CD4-positive, alpha-beta memory T cell (primary cell): ENCODE measurements at regions of chr2 and their contacts with region 1.

Region 1: GRCh38 chr2:74529357-74530238 is at the starts of genes AUP1 and HTRA2:
- DNase-seq: peak; percentile 83 to 88 (median 86)
- H3K4me3 ChIP-seq: peak within 1 kb of the TSS; percentile 89 to 100
- H3K4me3 Mint-ChIP-seq: peak within 1 kb of the TSS; percentile 92 to 96 (median 94)
- H3K27ac ChIP-seq: peak within 1 kb of the TSS; percentile 84
- H3K27ac Mint-ChIP-seq: peak within 1 kb of the TSS; percentile 87 to 97 (median 94)
- H3K4me1 ChIP-seq: peaks cover 31% of the 10 kb centered on the region
- H3K4me1 Mint-ChIP-seq: peaks cover 19 to 50% (median 40%) of the 10 kb centered on the region in 4 donors
- H3K27me3 ChIP-seq: no peaks in the 10 kb centered on the region
- H3K27me3 Mint-ChIP-seq: no peaks in the 10 kb centered on the region
- total RNA-seq, gene AUP1: 153 to 158 TPM
- total RNA-seq, gene HTRA2: 39.8 to 41.1 TPM

Region 2: GRCh38 chr2:74250189-74250631 is 279.4 kb before region 1 on chr2:
- CTCF ChIA-PET with region 1: interaction called, 25 read pairs
- POLR2A ChIA-PET with region 1: interaction called, 4 read pairs
- intact Hi-C with region 1: no loop called
- DNase-seq: peak in 4 of 5 donors; percentile 53 to 59 (median 57)
- H3K4me3 ChIP-seq: no peak overlapping the region
- H3K4me3 Mint-ChIP-seq: peak overlapping the region in 1 of 8 donors; percentile 55
- H3K27ac ChIP-seq: no peak overlapping the region
- H3K27ac Mint-ChIP-seq: peak overlapping the region in 3 of 7 donors; percentile 55 to 84 (median 84)
- H3K4me1 ChIP-seq: peaks cover 4% of the 10 kb centered on the region
- H3K4me1 Mint-ChIP-seq: peaks cover 4 to 8% (median 6%) of the 10 kb centered on the region in 4 donors
- H3K27me3 ChIP-seq: no peaks in the 10 kb centered on the region
- H3K27me3 Mint-ChIP-seq: no peaks in the 10 kb centered on the region

Region 3: DNA sequence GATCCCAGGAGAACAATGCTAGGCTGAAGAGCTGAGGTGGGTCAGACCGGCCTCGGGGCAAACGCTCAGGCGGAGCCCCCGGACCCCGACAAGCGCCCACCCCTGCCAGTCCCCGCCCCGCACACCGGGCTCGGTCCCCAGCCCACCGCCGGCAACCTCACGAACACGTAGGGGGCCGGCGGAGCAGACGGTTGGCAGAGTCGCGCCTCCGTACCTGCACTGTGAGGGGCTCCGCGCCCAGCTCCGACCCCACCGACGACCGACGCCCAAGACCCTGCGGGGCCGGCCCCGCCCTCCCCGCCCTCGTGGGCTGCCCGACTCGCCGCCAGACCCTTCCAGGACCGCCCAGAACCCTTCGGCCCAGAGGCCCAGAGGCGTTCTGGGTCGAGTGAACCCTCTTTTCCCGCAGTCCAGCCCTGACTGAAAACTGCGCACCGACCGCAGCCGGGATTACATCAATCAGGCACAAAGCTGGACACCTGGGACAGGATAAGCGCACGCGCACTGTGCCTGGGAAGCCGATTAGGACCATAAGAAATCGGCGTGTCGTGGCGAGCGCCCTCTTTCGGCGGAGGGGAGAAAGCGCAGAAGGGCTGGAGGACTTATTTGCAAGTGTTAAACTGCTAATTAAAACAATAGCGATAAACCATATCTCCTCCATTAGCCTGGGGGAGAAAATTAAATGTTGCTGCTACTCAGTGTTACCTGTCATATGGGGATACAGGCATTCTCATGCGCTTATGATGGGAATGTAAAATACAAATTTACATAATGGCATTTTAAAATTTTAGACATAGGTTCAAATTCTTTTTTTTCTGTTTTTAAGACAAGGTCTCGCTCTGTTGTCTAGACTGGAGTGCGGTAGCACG is 137.8 kb before region 1 on chr2:
- CTCF ChIA-PET with region 1: interaction called, 3 read pairs
- POLR2A ChIA-PET with region 1: interaction called, 12 read pairs
- intact Hi-C with region 1: no loop called
- DNase-seq: peak; percentile 92 to 96 (median 94)
- H3K4me3 ChIP-seq: peak overlapping the region; percentile 84 to 90
- H3K4me3 Mint-ChIP-seq: peak overlapping the region in 5 of 8 donors; percentile 96 to 99 (median 97)
- H3K27ac ChIP-seq: peak overlapping the region; percentile 88
- H3K27ac Mint-ChIP-seq: peak overlapping the region in 6 of 7 donors; percentile 99 to 100 (median 100)
- H3K4me1 ChIP-seq: peaks cover 27% of the 10 kb centered on the region
- H3K4me1 Mint-ChIP-seq: peaks cover 5 to 13% (median 6%) of the 10 kb centered on the region in 4 donors
- H3K27me3 ChIP-seq: no peaks in the 10 kb centered on the region
- H3K27me3 Mint-ChIP-seq: peaks cover 0 to 5% of the 10 kb centered on the region in 2 donors

Region 4: DNA sequence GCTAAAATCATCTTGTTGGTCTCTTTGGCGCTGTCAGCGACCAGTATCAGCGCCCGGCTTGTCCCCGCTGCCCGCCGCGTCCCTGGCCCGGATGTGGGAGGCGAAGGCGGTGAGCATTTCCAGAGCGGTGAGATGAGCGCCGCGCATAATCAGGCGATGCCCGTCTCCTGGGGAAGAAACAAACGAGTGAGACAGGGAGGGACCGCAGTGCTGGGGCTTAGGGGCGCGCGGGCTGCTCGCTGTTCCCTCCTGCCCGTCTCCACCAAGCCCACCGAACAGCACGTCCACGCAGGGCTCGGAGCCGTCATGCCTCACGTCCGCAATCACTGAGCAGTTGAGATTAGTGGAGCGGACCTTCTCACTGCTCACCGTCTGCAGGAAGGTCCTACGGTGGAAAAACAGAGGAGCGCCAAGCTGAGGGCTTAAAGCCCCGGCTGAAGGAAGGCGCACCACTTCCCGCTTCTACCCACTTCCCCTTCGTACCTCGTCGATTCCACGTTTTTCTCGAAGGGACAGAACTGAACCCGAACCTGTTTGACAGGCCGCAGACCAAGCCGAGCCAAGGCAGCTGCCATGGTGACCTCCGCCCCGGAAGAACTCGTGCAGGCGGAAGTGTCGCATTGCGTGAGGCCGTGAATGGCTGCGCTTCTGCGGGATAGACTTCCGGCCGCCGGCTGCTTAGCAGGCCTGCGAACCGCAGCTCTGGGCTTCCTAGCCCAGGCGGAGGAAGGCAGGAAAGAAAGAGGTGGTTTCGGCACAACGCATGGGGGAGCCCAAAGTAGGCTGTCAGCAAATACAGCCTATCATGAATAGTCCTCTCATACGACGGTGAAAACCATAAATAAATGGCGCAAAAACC is 57.3 kb before region 1 on chr2 and contains the start of gene MRPL53:
- CTCF ChIA-PET with region 1: interaction called, 4 read pairs
- POLR2A ChIA-PET with region 1: interaction called, 26 read pairs
- intact Hi-C with region 1: loop called (anchors 1 kb)
- DNase-seq: peak; percentile 95 to 96 (median 95)
- H3K4me3 ChIP-seq: peak within 1 kb of the TSS; percentile 67 to 84
- H3K4me3 Mint-ChIP-seq: peak within 1 kb of the TSS; percentile 96 to 99 (median 98)
- H3K27ac ChIP-seq: peak within 1 kb of the TSS; percentile 88
- H3K27ac Mint-ChIP-seq: peak within 1 kb of the TSS; percentile 97 to 100 (median 99)
- H3K4me1 ChIP-seq: peaks cover 20% of the 10 kb centered on the region
- H3K4me1 Mint-ChIP-seq: peaks cover 9 to 40% (median 21%) of the 10 kb centered on the region in 4 donors
- H3K27me3 ChIP-seq: no peaks in the 10 kb centered on the region
- H3K27me3 Mint-ChIP-seq: no peaks in the 10 kb centered on the region
- total RNA-seq, gene MRPL53: 72.8 to 82.3 TPM

Region 5: DNA sequence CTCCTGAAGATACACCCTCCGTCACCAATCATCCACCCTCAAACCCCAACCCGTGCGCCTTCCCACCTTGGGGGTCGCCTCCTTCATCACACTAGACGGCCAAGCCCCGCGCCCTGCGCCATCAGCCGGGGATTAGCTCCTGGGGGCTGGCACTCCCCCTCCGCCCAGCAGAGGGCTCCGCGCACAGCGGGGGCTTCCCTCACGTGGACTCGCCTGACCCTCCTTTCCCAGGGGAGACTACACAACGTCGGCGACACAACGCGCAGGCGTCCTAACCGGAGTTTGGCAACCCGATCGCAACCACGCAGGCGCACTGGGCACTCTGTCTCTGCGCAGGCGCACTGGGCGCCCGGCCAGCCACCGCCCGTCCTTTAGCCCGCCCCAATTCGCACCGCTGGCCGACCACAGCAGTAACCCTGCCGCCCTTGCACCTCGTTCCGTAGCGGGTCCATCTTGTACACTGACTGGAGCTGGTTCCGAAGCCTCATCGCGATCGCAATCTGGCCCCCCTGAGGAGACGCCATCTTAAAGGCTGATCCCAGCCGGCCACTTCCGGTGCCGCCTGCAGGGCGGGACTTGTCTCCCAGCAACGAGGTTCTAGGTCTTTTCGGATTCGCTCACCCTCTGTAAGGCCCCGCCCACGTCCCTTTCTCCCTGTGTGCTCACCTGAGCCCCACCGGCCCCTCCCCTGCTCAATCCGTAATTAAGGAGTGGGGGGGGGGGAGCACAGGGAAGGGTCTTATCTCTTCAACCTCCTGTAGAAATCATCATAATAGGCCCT is 22.3 kb before region 1 on chr2 and contains the start of gene PCGF1:
- CTCF ChIA-PET with region 1: interaction called, 17 read pairs
- POLR2A ChIA-PET with region 1: interaction called, 57 read pairs
- intact Hi-C with region 1: loop called (anchors 1 kb)
- DNase-seq: peak; percentile 98 to 99 (median 98)
- H3K4me3 ChIP-seq: peak within 1 kb of the TSS; percentile 83 to 97
- H3K4me3 Mint-ChIP-seq: peak within 1 kb of the TSS; percentile 98 to 100 (median 100)
- H3K27ac ChIP-seq: peak within 1 kb of the TSS; percentile 98
- H3K27ac Mint-ChIP-seq: peak within 1 kb of the TSS; percentile 97 to 100 (median 100)
- H3K4me1 ChIP-seq: peaks cover 40% of the 10 kb centered on the region
- H3K4me1 Mint-ChIP-seq: peaks cover 18 to 64% (median 46%) of the 10 kb centered on the region in 4 donors
- H3K27me3 ChIP-seq: peaks cover 19% of the 10 kb centered on the region
- H3K27me3 Mint-ChIP-seq: peaks cover 16 to 45% of the 10 kb centered on the region in 2 donors
- total RNA-seq, gene PCGF1: 31.1 to 42.2 TPM

Region 6: GRCh38 chr2:74553892-74554645 is 24.5 kb after region 1 on chr2 and contains the start of gene LOXL3:
- CTCF ChIA-PET with region 1: no interaction called
- POLR2A ChIA-PET with region 1: interaction called, 3 read pairs
- intact Hi-C with region 1: loop called (anchors 1 kb)
- DNase-seq: peak; percentile 79 to 84 (median 82)
- H3K4me3 ChIP-seq: peak within 1 kb of the TSS; percentile 84 to 99
- H3K4me3 Mint-ChIP-seq: peak within 1 kb of the TSS; percentile 94 to 98 (median 96)
- H3K27ac ChIP-seq: peak within 1 kb of the TSS; percentile 64
- H3K27ac Mint-ChIP-seq: peak within 1 kb of the TSS; percentile 73 to 98 (median 93)
- H3K4me1 ChIP-seq: peaks cover 23% of the 10 kb centered on the region
- H3K4me1 Mint-ChIP-seq: peaks cover 7 to 35% (median 19%) of the 10 kb centered on the region in 4 donors
- H3K27me3 ChIP-seq: peaks cover 16% of the 10 kb centered on the region
- H3K27me3 Mint-ChIP-seq: peaks cover 11 to 25% of the 10 kb centered on the region in 2 donors
- total RNA-seq, gene LOXL3: 0.25 to 0.32 TPM

Region 7: GRCh38 chr2:74566076-74566753 is 36.6 kb after region 1 on chr2:
- CTCF ChIA-PET with region 1: no interaction called
- POLR2A ChIA-PET with region 1: no interaction called
- intact Hi-C with region 1: no loop called
- DNase-seq: no peak
- H3K4me3 ChIP-seq: no peak overlapping the region
- H3K4me3 Mint-ChIP-seq: no peak overlapping the region
- H3K27ac ChIP-seq: no peak overlapping the region
- H3K27ac Mint-ChIP-seq: no peak overlapping the region
- H3K4me1 ChIP-seq: no peaks in the 10 kb centered on the region
- H3K4me1 Mint-ChIP-seq: no peaks in the 10 kb centered on the region
- H3K27me3 ChIP-seq: no peaks in the 10 kb centered on the region
- H3K27me3 Mint-ChIP-seq: peaks cover 9 to 25% of the 10 kb centered on the region in 2 donors